GM10248 (cell line): ENCODE measurements at regions of chr20 and their contacts with region 1.

Region 1: DNA sequence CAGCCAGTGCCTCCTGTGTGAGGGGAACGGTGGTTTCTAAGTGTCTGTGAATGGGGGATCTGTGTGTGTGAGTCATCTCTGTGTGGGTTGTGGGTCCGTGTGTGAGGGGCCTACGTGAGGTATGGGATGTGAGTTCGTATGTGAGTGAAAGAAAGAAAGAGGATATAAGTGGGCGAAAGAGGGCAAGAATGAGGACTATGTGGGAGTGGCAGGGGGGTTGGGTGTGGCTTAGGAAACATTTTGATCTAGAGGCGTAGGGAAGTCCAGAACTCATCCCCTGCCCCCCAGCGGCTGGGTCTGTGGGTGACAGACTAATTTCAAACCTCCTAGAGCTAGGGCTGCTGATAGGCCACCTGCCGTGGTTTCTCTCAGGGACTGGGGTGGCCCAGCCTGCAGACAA is 35.5 kb downstream of the DHX35 start:
- DNase-seq: peak; percentile 84
- CTCF ChIP-seq: peak; percentile 59

Region 2: DNA sequence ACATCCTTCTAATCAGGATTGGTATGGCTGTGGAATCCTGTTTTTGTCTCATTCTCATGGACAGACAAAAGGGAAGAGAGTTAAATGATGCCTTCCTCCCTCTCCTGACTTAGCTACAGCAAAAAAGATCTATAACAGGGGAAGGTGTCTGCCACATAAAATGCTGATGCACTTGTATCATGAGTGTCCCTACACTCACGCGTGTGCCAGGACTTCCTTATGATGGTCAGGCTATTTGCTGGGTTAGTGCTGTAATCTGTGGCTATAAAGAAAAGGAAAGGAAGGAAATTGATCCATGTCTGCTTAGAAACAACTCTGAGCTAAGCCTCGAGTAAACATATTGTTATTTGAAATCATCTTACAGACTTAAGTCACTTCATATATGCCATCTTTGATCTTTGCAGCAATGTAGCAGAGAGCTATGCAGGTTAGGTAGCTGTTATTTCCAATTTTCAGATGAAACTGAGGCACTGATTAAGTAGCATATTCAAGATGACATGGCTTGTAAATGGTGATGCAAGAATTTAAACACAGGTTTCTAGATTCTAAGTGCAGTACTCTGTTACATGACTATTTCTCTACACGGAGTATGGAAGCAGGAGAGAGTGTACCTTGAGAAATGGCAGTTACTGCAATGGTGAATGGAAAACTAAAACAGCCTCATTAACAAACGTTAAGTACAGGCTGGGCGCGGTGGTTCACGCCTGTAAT is 43.8 kb before region 1 on chr20:
- CTCF ChIA-PET with region 1: no interaction called
- POLR2A ChIA-PET with region 1: no interaction called
- DNase-seq: no peak
- CTCF ChIP-seq: no peak

Region 3: DNA sequence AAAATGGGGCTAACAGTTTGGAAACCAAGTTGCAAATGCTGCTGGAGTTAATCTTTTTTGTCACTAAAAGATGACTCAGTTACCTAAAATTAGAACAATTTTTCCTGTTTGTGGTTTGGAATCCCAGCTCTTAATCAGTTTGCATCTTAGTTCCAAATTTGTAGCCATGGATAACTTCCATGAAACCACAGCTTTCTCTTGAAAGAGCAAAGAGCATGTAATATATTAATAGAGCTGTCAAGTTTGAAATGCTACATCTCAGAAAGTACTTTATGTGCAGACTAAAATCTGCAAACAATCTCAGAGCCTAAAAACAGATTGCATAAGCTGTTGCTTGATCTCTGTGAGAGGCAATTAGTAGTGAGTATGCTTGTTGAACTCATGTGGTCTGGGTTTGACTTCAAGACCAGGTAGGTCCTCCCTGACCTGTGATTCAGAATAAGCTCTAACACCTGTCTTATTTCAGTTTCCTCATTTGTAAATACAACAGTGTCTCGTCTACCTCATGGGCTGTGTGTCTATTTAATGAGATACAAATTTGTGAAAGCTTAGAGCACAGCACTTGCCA is 11.9 kb before region 1 on chr20:
- CTCF ChIA-PET with region 1: interaction called, 32 read pairs
- POLR2A ChIA-PET with region 1: interaction called, 4 read pairs
- DNase-seq: peak; percentile 19
- CTCF ChIP-seq: no peak

Region 4: GRCh38 chr20:39010496-39010895 is 12.9 kb after region 1 on chr20:
- CTCF ChIA-PET with region 1: interaction called, 22 read pairs
- POLR2A ChIA-PET with region 1: no interaction called
- DNase-seq: no peak
- CTCF ChIP-seq: no peak

Region 5: DNA sequence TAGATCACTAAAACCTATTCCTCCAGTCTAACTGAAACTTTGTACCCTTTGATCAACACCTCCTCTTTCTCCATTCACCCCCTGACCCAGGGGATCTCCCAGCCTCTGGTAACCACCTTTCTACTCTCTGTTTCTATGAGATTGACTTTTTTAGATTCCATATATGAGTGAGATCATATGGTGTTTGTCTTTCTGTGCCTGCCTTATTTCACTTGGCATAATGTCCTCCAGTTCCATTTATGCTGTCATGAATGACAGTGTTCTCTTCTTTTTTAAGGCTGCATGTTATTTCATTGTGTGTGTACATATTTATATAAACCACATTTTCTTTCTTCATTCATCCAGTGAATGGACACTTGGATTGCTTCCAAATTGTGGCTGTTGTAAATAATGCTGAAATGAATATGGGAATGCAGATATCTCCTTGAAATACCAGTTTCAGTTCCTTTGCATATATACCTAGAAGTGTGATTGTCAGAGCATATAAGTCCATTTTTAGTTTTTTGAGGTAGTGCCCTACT is 22.2 kb after region 1 on chr20:
- CTCF ChIA-PET with region 1: interaction called, 14 read pairs
- POLR2A ChIA-PET with region 1: no interaction called
- DNase-seq: no peak
- CTCF ChIP-seq: no peak

Region 6: GRCh38 chr20:39105549-39105948 is 107.9 kb after region 1 on chr20:
- CTCF ChIA-PET with region 1: no interaction called
- POLR2A ChIA-PET with region 1: no interaction called
- DNase-seq: no peak
- CTCF ChIP-seq: no peak